ENCODE measurements at regions of chr7 and their contacts with region 1.

Region 1: GRCh38 chr7:2729701-2730417 is 41.9 kb downstream of the AMZ1 start:
- DNase-seq: no peak
- H3K4me3 Mint-ChIP-seq: no peak overlapping the region
- H3K27ac Mint-ChIP-seq: no peak overlapping the region
- H3K4me1 Mint-ChIP-seq: peaks cover 18% of the 10 kb centered on the region
- H3K27me3 Mint-ChIP-seq: no peaks in the 10 kb centered on the region

Region 2: DNA sequence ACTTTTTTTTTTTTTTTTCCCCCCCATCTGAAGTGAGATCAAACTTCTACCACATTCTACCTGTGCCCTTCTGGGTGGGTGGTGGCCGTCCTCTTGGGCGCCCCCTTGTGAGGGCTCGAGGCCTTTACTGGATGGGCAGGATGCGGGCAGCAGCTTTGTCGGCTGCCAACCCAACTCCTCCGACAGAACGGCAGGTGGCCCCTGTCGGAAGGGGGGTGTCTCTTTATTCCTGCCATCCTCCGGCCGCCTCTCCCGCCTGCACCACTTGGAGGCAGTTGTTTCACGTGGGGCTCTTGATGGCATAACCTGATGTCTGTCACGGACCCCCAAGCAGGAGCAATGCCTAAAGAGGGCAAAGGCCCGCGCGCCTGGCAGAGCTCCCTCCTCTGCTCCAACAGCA is 10.9 kb before region 1 on chr7:
- CTCF ChIA-PET with region 1: interaction called, 11 read pairs
- DNase-seq: peak; percentile 78
- H3K4me3 Mint-ChIP-seq: no peak overlapping the region
- H3K27ac Mint-ChIP-seq: no peak overlapping the region
- H3K4me1 Mint-ChIP-seq: peaks cover 68% of the 10 kb centered on the region
- H3K27me3 Mint-ChIP-seq: peaks cover 46% of the 10 kb centered on the region